ENCODE measurements at regions of chr2 and their contacts with region 1.

Region 1: DNA sequence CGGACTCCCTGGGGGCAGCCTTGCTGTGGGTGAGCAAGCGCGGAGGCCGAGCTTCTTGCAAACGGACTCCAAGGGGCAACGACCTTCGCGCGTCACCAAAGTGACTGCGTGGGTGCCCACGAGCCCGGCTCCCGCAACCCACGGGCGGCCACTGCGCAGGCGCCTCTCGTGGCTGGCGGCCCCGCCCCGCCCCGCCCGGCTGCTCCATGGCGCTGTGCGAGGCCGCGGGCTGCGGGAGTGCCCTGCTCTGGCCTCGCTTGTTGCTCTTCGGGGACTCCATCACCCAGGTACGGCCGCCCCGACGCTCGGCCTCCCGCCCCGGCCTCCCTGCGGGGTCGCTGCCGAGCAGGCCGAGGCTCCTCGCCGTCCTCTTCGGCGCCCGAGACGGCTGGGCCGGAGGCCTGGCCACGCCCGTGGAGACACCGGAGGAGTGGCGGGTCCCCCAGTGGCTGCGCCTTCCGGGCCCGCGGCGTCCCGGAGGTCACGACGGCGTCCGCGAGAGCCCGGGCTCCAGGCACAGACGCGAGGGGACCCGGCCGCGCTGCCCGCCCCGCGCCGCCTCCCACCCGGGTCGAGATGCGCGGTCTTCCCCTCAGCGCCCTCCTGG is at the start of gene IAH1:
- DNase-seq: peak; percentile 89
- total RNA-seq, gene IAH1: 36.7 to 45.2 TPM

Region 2: GRCh38 chr2:9434489-9434888 is 40.0 kb before region 1 on chr2:
- intact Hi-C with region 1: loop called in 1 of 2 experiments (anchors 1 kb)
- DNase-seq: no peak

Measured in posterior vena cava (tissue), 2 donors.